ENCODE measurements at regions of chr4 and their contacts with region 1.

Region 1: GRCh38 chr4:127732613-127733328 is 2.6 kb downstream of the SLC25A31 start:
- DNase-seq: no peak
- H3K4me3 ChIP-seq: no peak overlapping the region
- H3K27ac ChIP-seq: no peak overlapping the region
- H3K4me1 ChIP-seq: no peaks in the 10 kb centered on the region
- H3K27me3 ChIP-seq: no peaks in the 10 kb centered on the region
- CTCF ChIP-seq: peak; percentile 71

Region 2: DNA sequence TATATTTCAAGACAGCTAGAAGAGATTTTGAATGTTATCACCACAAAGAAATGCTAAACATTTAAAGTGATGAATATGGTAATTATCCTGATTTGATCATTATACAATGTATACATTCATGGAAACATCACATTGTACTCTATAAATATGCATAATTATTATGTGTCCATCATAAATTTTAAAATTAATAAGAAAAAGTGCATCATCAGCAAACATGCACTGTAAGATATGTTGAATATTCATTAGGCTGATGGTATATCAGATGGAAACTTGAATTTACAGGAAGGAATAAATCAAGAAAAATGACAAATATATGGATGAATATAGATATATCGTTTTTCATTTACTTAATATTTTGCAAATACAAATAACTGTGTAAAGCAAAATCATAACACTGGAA is 912.1 kb before region 1 on chr4:
- intact Hi-C with region 1: no loop called
- DNase-seq: no peak
- H3K4me3 ChIP-seq: no peak overlapping the region
- H3K27ac ChIP-seq: no peak overlapping the region
- H3K4me1 ChIP-seq: no peaks in the 10 kb centered on the region
- H3K27me3 ChIP-seq: no peaks in the 10 kb centered on the region
- CTCF ChIP-seq: no peak

Region 3: DNA sequence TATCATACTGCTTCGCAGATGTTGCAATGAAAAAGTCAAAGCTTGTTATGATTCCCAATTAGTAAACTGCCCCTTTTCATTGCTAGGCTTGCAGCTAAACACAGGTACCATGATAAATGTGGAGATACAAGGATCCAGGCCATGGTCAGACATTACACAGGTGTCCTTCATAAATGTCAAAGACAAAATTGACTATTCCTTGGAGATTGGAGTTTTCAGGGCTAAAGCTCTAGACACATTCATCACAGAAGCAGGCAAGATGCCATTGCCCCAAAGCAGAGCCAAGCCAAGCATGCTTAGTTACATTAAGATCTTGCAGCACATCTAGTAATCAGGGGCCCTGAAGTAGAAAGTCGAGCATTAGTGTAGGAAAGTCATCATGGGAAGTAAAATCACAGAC is 211.3 kb before region 1 on chr4:
- intact Hi-C with region 1: no loop called
- DNase-seq: peak; percentile 27
- H3K4me3 ChIP-seq: no peak overlapping the region
- H3K27ac ChIP-seq: no peak overlapping the region
- H3K4me1 ChIP-seq: no peaks in the 10 kb centered on the region
- H3K27me3 ChIP-seq: no peaks in the 10 kb centered on the region
- CTCF ChIP-seq: no peak

Region 4: DNA sequence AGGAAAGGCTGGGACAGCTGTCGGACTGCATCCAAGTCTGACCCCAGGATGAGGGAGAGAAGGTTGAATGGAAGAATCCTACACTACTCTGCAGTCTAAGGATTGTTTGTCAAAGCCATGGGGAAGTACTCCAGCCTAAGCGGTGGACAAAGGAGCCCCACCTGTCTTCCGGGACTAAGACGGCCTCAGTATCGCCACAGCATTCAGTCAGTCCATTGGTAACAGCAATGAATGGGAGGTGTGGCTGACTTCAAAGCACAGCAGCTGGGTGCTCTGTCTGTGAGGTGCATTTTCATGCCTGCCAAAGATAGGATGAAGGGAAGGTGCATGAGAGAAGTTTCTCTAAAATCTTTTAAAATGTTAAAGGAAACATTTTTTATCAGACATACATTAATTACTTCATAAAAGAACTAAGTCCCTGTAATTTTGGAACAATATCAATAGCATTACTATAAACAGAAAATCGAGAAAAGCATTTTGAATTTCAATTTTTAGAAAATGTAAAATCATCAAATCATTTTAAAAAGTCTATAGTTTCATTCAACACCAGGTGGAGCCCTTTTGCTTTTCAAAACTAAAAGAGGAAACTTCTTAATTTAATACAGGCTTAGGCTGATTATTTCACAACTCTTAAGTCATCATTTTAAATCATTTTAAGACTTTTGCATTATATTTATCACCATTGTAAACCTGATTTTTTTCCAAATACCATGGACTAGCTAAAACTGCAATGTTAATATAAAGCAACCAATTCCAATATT is 127.6 kb before region 1 on chr4:
- intact Hi-C with region 1: loop called (anchors 2 kb)
- DNase-seq: no peak
- H3K4me3 ChIP-seq: no peak overlapping the region
- H3K27ac ChIP-seq: no peak overlapping the region
- H3K4me1 ChIP-seq: no peaks in the 10 kb centered on the region
- H3K27me3 ChIP-seq: peaks cover 13% of the 10 kb centered on the region
- CTCF ChIP-seq: peak; percentile 71

Region 5: DNA sequence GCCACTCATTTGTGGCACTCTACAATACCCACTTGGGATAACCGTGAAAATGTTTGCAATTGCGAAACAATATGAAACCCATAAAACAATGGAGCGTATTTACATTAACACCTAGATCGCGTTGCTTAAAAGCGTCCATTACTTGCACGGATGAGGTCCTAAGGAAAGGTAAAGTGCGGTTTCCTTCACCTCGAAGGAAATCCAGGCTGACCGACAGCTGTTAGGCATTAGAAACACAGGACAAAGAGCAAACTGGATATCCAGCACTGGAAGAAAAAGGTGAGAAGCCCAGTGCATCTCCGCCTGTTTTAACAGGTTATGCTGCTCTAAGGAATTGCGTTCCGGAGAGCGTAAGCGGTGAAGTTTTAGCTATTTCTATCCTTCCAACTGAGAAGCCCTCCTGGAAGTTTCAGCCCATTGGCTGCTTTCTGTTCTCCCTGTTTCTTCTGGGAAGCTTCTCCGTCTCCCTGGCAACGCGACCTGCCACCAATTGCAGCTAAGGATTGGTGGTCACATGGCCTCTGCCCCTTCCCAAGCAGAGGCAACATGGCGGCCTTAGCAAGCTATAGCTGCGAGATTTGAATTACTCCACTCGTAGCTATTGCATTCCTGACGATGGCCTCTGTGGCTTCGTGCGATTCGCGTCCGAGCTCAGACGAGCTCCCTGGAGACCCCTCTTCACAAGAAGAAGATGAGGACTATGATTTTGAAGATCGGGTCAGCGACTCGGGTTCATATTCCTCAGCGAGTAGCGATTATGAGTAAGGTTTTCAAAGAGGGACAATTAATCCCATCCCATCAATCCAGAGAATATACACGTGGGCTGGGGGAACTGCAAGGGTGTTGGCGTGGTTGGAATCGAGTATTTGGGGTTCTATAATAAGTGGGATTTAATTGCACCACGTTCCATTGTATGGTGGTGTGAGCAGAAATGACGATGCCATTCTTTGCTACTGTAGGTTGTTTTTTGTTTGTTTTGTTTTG is 100.1 kb before region 1 on chr4 and contains the start of gene INTU:
- intact Hi-C with region 1: no loop called
- DNase-seq: peak; percentile 92
- H3K4me3 ChIP-seq: peak within 1 kb of the TSS; percentile 76
- H3K27ac ChIP-seq: peak within 1 kb of the TSS; percentile 60
- H3K4me1 ChIP-seq: peaks cover 23% of the 10 kb centered on the region
- H3K27me3 ChIP-seq: peaks cover 7% of the 10 kb centered on the region
- CTCF ChIP-seq: no peak
- total RNA-seq, gene INTU: 5.2 TPM